Breast epithelium (tissue), 4 donors: ENCODE measurements at regions of chr19 and their contacts with region 1.

Region 1: DNA sequence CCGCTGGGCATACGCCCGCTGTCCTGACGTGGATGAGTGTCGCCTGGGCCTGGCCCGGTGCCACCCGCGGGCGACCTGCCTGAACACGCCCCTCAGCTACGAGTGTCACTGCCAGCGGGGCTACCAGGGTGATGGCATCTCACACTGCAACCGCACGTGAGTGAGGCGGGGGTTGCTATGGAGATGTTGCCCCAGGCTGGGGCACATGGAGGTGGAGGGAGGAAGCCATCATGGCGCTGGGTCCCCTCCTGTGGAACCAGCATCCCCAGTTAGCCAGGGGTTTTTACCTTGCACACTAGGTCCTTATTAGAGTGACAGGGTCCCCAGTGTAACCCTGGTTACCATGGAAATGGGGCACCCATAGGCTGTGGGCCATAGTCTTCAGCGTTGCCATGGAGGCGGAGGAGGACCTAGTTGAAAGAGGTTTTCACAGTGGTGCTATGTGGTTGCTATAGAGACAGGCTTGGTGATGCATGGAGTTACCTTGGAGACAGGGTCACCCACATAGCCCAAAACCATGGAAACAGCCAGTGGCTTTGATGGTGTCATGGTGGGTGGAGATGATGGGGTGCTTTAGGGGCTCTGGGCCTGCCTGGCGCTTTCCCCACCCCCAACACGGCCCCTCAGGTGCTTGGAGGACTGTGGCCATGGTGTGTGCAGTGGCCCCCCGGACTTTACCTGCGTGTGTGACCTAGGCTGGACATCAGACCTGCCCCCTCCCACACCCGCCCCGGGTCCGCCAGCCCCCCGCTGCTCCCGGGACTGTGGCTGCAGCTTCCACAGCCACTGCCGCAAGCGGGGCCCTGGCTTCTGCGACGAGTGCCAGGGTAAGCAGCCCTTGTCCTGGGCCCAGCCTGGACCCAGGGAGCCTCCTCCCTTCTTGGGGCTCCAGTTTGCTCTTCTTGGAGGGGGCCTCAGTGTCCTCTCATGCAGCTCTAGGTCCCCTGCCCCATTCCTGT is 27.1 kb downstream of the MEGF8 start:
- DNase-seq: peak in 1 of 2 donors; percentile 48
- H3K4me3 ChIP-seq: no peak overlapping the region
- H3K27ac ChIP-seq: no peak overlapping the region
- H3K4me1 ChIP-seq: no peaks in the 10 kb centered on the region
- H3K27me3 ChIP-seq: no peaks in the 10 kb centered on the region
- CTCF ChIP-seq: no peak
- POLR2A ChIP-seq: no peak

Region 2: GRCh38 chr19:40553885-40554857 is 1798.4 kb before region 1 on chr19:
- intact Hi-C with region 1: loop called (anchors 5 kb)
- DNase-seq: no peak
- H3K4me3 ChIP-seq: no peak overlapping the region
- H3K27ac ChIP-seq: no peak overlapping the region
- H3K4me1 ChIP-seq: no peaks in the 10 kb centered on the region
- H3K27me3 ChIP-seq: peaks cover 0 to 15% of the 10 kb centered on the region in 2 donors
- CTCF ChIP-seq: no peak
- POLR2A ChIP-seq: no peak

Region 3: GRCh38 chr19:42295831-42296525 is 56.6 kb before region 1 on chr19:
- intact Hi-C with region 1: no loop called
- DNase-seq: peak; percentile 84 to 87
- H3K4me3 ChIP-seq: no peak overlapping the region
- H3K27ac ChIP-seq: peak overlapping the region; percentile 19 to 48
- H3K4me1 ChIP-seq: no peaks in the 10 kb centered on the region
- H3K27me3 ChIP-seq: no peaks in the 10 kb centered on the region
- CTCF ChIP-seq: peak; percentile 88 to 95 (median 88)
- POLR2A ChIP-seq: no peak